Heart right ventricle (tissue), 16 donors: ENCODE measurements at regions of chr7 and their contacts with region 1.

Region 1: DNA sequence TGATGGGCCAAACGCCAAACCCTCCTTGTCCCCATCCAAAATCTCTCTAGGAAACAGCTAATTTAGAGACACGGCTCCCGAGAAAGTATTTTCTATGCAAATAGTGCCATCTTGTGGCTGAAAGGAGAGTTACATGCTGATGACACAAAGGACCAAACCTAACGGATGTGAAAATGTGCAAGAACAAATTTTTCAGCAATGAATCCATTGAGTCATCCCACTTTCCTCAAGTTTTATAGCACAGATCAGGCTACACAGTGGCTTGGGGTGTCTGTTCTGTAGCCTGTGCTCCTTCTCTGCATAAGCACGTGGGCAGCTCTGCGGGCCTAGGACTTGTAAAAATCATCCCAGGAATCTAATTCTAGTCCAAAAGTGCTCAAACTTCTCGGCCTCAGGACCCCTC is 154.8 kb upstream of the PRR15 start:
- DNase-seq: peak in 1 of 2 donors; percentile 65
- ATAC-seq: peak in 7 of 8 donors; percentile 38 to 79 (median 57)
- H3K4me3 ChIP-seq: no peak overlapping the region
- H3K27ac ChIP-seq: no peak overlapping the region
- H3K4me1 ChIP-seq: peaks cover 0 to 9% (median 0%) of the 10 kb centered on the region in 9 donors
- H3K27me3 ChIP-seq: no peaks in the 10 kb centered on the region
- CTCF ChIP-seq: peak; percentile 73 to 91 (median 84)

Region 2: GRCh38 chr7:28921822-28922221 is 487.0 kb before region 1 on chr7:
- intact Hi-C with region 1: loop called (anchors 2 to 5 kb)
- DNase-seq: peak in 1 of 2 donors; percentile 58
- ATAC-seq: peak; percentile 85 to 95 (median 93)
- H3K4me3 ChIP-seq: peak overlapping the region in 1 of 10 donors; percentile 6
- H3K27ac ChIP-seq: no peak overlapping the region
- H3K4me1 ChIP-seq: peaks cover 0 to 27% (median 12%) of the 10 kb centered on the region in 9 donors
- H3K27me3 ChIP-seq: peaks cover 0 to 4% (median 0%) of the 10 kb centered on the region in 7 donors
- CTCF ChIP-seq: peak; percentile 81 to 90 (median 85)

Region 3: GRCh38 chr7:29105752-29106668 is 302.8 kb before region 1 on chr7:
- intact Hi-C with region 1: loop called in 8 of 10 experiments (anchors 2 to 10 kb)
- DNase-seq: peak; percentile 11 to 67
- ATAC-seq: peak; percentile 69 to 86 (median 79)
- H3K4me3 ChIP-seq: no peak overlapping the region
- H3K27ac ChIP-seq: no peak overlapping the region
- H3K4me1 ChIP-seq: peaks cover 0 to 24% (median 5%) of the 10 kb centered on the region in 9 donors
- H3K27me3 ChIP-seq: no peaks in the 10 kb centered on the region
- CTCF ChIP-seq: peak; percentile 72 to 91 (median 85)

Region 4: GRCh38 chr7:29119538-29120199 is 289.2 kb before region 1 on chr7:
- intact Hi-C with region 1: loop called in 5 of 10 experiments (anchors 5 to 10 kb)
- DNase-seq: no peak
- ATAC-seq: no peak
- H3K4me3 ChIP-seq: no peak overlapping the region
- H3K27ac ChIP-seq: no peak overlapping the region
- H3K4me1 ChIP-seq: peaks cover 0 to 42% (median 28%) of the 10 kb centered on the region in 9 donors
- H3K27me3 ChIP-seq: no peaks in the 10 kb centered on the region
- CTCF ChIP-seq: peak in 1 of 9 donors; percentile 5

Region 5: DNA sequence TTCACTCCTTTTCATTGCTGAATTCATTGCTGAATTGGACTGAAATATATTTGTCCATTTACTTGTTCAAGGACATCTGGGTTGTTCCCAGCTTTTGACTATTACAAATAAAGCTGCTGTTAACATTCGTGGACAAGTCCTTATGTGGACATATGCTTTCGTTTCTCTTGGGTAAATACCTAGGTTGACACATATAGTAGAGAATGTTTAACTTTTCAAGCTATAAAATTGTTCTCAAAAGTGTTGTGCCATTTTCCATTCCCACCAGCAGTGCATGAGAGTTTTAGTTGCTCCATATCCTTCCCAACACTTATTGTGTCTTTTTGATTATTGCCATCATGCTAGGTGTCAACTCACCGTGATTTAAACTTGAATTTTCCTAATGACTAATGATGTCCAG is 245.0 kb before region 1 on chr7:
- intact Hi-C with region 1: no loop called
- DNase-seq: no peak
- ATAC-seq: no peak
- H3K4me3 ChIP-seq: no peak overlapping the region
- H3K27ac ChIP-seq: no peak overlapping the region
- H3K4me1 ChIP-seq: no peaks in the 10 kb centered on the region
- H3K27me3 ChIP-seq: no peaks in the 10 kb centered on the region
- CTCF ChIP-seq: no peak

Region 6: DNA sequence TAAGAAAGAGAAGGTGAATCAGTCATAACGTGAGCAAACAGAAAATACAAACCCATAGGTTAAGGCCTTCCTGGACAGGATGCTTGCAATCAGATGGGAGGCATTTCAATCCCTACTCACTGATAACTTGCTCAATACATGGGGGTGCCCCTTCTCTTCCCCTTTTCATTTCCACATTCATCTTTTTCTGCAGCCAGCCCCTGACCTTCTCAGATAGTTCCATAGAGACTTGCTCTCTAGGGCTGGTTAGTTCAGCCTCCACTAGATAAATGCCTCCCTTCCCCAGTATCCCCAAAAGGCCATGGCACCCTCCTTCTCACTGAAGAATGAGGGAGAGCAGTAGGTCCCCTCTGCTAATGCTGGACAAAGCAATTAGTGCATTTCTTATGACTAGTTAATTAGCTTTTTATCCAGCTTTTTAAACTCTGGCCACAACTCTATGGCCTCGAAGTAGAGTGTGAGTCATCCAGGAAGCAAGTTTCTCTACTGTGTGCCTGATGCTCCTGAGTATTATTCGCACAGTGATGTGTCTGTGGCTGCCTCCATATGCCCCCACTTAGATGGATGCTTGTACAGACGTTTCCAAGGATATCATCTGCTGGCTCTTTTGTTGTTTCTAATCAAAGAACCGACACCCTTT is 201.6 kb before region 1 on chr7:
- intact Hi-C with region 1: loop called in 1 of 10 experiments (anchors 10 kb)
- DNase-seq: no peak
- ATAC-seq: peak in 2 of 8 donors; percentile 52 to 53
- H3K4me3 ChIP-seq: no peak overlapping the region
- H3K27ac ChIP-seq: no peak overlapping the region
- H3K4me1 ChIP-seq: peaks cover 0 to 24% (median 0%) of the 10 kb centered on the region in 9 donors
- H3K27me3 ChIP-seq: no peaks in the 10 kb centered on the region
- CTCF ChIP-seq: no peak

Region 7: DNA sequence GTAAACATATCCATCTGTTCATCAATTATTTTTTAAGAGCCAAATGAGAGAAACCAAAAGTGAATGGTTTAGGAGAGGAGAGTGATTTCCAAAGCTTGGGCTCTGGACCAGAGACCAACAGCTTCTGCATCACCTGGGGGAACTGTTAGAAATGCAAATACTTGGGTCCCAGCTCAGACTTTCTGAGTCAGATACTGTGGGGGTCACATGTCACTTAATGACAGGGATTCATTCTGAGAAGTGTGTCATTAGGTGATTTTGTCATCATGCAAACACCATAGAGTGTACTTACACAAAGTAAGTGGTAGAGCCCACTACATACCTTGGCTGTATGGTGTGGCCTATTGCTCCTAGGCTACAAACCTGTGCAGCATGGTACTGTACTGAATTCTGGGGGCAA is 26.3 kb after region 1 on chr7:
- intact Hi-C with region 1: no loop called
- DNase-seq: no peak
- ATAC-seq: no peak
- H3K4me3 ChIP-seq: no peak overlapping the region
- H3K27ac ChIP-seq: no peak overlapping the region
- H3K4me1 ChIP-seq: peaks cover 0 to 7% (median 0%) of the 10 kb centered on the region in 9 donors
- H3K27me3 ChIP-seq: no peaks in the 10 kb centered on the region
- CTCF ChIP-seq: no peak

Region 8: GRCh38 chr7:29488977-29489376 is 80.1 kb after region 1 on chr7:
- intact Hi-C with region 1: no loop called
- DNase-seq: no peak
- ATAC-seq: peak in 7 of 8 donors; percentile 30 to 71 (median 58)
- H3K4me3 ChIP-seq: peak overlapping the region in 2 of 10 donors; percentile 3 to 6
- H3K27ac ChIP-seq: peak overlapping the region in 8 of 10 donors; percentile 18 to 77 (median 50)
- H3K4me1 ChIP-seq: peaks cover 0 to 44% (median 19%) of the 10 kb centered on the region in 9 donors
- H3K27me3 ChIP-seq: no peaks in the 10 kb centered on the region
- CTCF ChIP-seq: no peak